HCT116 (cell line): ENCODE measurements at regions of chr22 and their contacts with region 1.

Region 1: DNA sequence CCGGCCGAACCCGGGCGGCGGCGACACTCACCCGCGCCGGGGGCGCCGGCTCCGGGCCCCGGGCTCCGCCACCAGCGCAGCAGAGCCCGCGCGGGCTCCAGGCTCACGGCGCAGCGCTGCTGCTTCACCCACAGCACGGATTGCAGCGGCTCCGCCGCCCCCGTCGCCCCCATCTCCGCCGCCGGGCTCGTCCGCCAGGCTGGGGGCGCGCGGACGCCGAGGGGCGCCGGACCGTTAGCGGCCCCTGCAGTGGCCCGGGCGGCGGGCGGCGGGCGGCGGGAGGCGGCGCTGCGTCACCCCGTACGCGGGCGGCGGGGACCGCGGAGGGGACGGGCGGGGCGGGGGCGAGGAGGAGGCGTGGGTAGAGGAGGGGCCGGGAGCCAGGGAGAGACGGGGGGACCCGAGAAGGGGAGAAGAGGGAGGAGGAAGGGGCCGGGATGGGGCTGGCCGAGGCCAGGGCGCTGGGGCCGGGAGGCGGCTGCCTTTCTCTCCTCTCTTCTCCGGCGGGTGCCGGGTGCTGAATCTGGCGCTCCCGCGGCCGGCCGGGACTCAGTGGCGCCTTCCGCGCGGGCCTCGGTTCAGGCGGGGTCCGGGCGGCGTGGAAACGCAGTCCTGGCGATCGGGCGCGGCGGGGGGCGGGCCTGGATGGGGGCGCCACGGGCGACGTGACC is at the start of gene CERK:
- DNase-seq: no peak
- ATAC-seq: peak; percentile 71
- H3K4me3 ChIP-seq: peak within 1 kb of the TSS; percentile 72 to 75
- H3K27ac ChIP-seq: peak within 1 kb of the TSS; percentile 99
- H3K4me1 ChIP-seq: peaks cover 20 to 31% of the 10 kb centered on the region in 2 experiments
- H3K27me3 ChIP-seq: no peaks in the 10 kb centered on the region
- CTCF ChIP-seq: no peak
- POLR2A ChIP-seq: peak; percentile 69
- RAD21 ChIP-seq: no peak
- total RNA-seq, gene CERK: 35.0 TPM

Region 2: GRCh38 chr22:46415776-46416519 is 322.2 kb before region 1 on chr22:
- CTCF ChIA-PET with region 1: no interaction called
- POLR2A ChIA-PET with region 1: no interaction called
- RAD21 ChIA-PET with region 1: no interaction called
- intact Hi-C with region 1: no loop called
- DNase-seq: no peak
- ATAC-seq: no peak
- H3K4me3 ChIP-seq: no peak overlapping the region
- H3K27ac ChIP-seq: no peak overlapping the region
- H3K4me1 ChIP-seq: no peaks in the 10 kb centered on the region
- H3K27me3 ChIP-seq: no peaks in the 10 kb centered on the region
- CTCF ChIP-seq: no peak
- POLR2A ChIP-seq: no peak
- RAD21 ChIP-seq: no peak

Region 3: GRCh38 chr22:46587492-46588278 is 150.4 kb before region 1 on chr22:
- CTCF ChIA-PET with region 1: no interaction called
- POLR2A ChIA-PET with region 1: no interaction called
- RAD21 ChIA-PET with region 1: no interaction called
- intact Hi-C with region 1: no loop called
- DNase-seq: no peak
- ATAC-seq: no peak
- H3K4me3 ChIP-seq: no peak overlapping the region
- H3K27ac ChIP-seq: no peak overlapping the region
- H3K4me1 ChIP-seq: peaks cover 0 to 7% of the 10 kb centered on the region in 2 experiments; a peak in 1 of 4 replicates
- H3K27me3 ChIP-seq: no peaks in the 10 kb centered on the region
- CTCF ChIP-seq: no peak
- POLR2A ChIP-seq: no peak
- RAD21 ChIP-seq: no peak

Region 4: GRCh38 chr22:46754110-46754799 is 16.1 kb after region 1 on chr22:
- CTCF ChIA-PET with region 1: interaction called, 20 read pairs
- POLR2A ChIA-PET with region 1: interaction called, 4 read pairs
- RAD21 ChIA-PET with region 1: interaction called in 1 of 2 experiments, 3 read pairs
- intact Hi-C with region 1: loop called (anchors 1 kb)
- DNase-seq: peak; percentile 90
- ATAC-seq: peak; percentile 90
- H3K4me3 ChIP-seq: peak overlapping the region; percentile 31 to 32
- H3K27ac ChIP-seq: peak overlapping the region; percentile 88
- H3K4me1 ChIP-seq: peaks cover 16 to 50% of the 10 kb centered on the region in 2 experiments
- H3K27me3 ChIP-seq: no peaks in the 10 kb centered on the region
- CTCF ChIP-seq: no peak
- POLR2A ChIP-seq: no peak
- RAD21 ChIP-seq: no peak

Region 5: DNA sequence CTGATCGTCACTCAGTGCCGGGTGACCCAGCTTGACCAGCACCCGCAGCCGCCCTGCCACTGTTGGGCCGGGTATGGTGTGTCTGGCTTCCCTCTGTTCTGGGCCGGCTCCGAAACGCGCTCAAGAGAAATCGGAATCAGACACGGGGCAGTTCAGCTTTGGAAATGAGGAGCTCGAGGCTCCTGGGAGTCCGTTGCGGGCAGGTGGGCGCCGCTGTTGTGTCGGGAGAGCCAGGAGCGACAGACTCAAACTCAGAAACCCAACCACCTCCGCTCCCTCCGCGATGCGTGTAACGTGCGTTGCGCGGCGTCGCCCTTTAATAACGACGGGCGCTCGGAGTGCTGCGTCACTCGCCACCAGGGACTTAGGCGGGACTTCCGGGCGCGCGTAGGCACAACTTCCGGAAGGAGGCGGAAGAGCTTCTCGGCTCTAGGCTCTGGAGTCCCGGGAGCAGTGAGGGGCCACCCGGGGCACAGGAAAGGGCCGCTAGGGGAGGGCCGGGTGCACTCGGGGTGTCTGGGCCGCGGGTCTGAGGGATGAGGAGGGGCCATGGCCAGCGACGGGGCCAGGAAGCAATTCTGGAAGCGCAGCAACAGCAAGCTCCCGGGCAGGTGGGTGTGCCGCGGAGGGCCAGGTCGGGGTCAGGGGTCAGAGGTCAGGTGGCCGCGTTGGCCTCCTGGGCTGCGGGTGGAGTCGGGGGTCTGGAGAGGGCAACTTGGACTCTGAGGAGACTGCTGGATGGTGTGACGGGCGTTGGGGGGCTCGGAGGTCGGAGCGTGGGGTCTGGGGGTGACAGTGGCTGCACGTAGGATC is 24.3 kb after region 1 on chr22 and contains the start of gene TBC1D22A:
- CTCF ChIA-PET with region 1: interaction called, 20 read pairs
- POLR2A ChIA-PET with region 1: interaction called, 9 read pairs
- RAD21 ChIA-PET with region 1: interaction called in 1 of 2 experiments, 3 read pairs
- intact Hi-C with region 1: no loop called
- DNase-seq: peak; percentile 90
- ATAC-seq: peak; percentile 92
- H3K4me3 ChIP-seq: peak within 1 kb of the TSS; percentile 99 to 100
- H3K27ac ChIP-seq: peak within 1 kb of the TSS; percentile 85
- H3K4me1 ChIP-seq: peaks cover 12 to 32% of the 10 kb centered on the region in 2 experiments
- H3K27me3 ChIP-seq: no peaks in the 10 kb centered on the region
- CTCF ChIP-seq: no peak
- POLR2A ChIP-seq: peak; percentile 97
- RAD21 ChIP-seq: peak; percentile 18; the same call in 1 of the 2 replicates
- total RNA-seq, gene TBC1D22A: 20.9 TPM